Naive thymus-derived CD4-positive, alpha-beta T cell (primary cell): ENCODE measurements at regions of chr14 and their contacts with region 1.

Region 1: GRCh38 chr14:54420013-54420809 is 21.0 kb downstream of the CNIH1 start:
- DNase-seq: peak in 4 of 9 donors; percentile 7 to 27 (median 11)
- ATAC-seq: peak; percentile 53
- H3K4me3 ChIP-seq: no peak overlapping the region
- H3K4me3 Mint-ChIP-seq: no peak overlapping the region
- H3K27ac ChIP-seq: no peak overlapping the region
- H3K27ac Mint-ChIP-seq: peak overlapping the region in 7 of 9 donors; percentile 3 to 66 (median 58)
- H3K4me1 ChIP-seq: no peaks in the 10 kb centered on the region
- H3K4me1 Mint-ChIP-seq: peaks cover 0 to 6% (median 2%) of the 10 kb centered on the region in 7 donors
- H3K27me3 ChIP-seq: no peaks in the 10 kb centered on the region
- H3K27me3 Mint-ChIP-seq: no peaks in the 10 kb centered on the region

Region 2: GRCh38 chr14:54462048-54462447 is 41.8 kb after region 1 on chr14:
- CTCF ChIA-PET with region 1: no interaction called
- POLR2A ChIA-PET with region 1: no interaction called
- intact Hi-C with region 1: loop called in 1 of 2 experiments (anchors 2 kb)
- DNase-seq: no peak
- ATAC-seq: no peak
- H3K4me3 ChIP-seq: no peak overlapping the region
- H3K4me3 Mint-ChIP-seq: no peak overlapping the region
- H3K27ac ChIP-seq: no peak overlapping the region
- H3K27ac Mint-ChIP-seq: no peak overlapping the region
- H3K4me1 ChIP-seq: no peaks in the 10 kb centered on the region
- H3K4me1 Mint-ChIP-seq: no peaks in the 10 kb centered on the region
- H3K27me3 ChIP-seq: no peaks in the 10 kb centered on the region
- H3K27me3 Mint-ChIP-seq: no peaks in the 10 kb centered on the region